Calu3 (cell line): ENCODE measurements at regions of chr19 and their contacts with region 1.

Region 1: DNA sequence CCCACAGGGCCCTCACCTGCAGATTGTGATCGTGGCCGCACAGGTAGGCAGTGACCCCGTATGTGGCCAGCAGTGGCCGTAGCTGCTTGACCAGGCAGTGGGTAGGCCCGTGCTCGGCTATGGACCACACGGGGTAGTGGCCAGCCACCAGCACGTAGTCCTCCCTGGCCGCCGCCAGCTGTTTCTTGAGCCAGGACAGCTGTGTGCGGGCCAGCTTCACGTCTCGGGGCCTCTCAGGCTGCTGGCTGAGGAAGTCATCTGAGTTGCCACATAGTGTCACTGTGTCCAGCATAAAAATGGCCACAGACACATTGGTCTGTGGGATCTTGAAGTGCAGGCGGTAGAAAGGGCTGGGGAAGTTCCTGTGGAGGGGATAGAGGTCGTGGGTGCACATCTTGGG is 1.2 kb downstream of the ACP5 start:
- DNase-seq: no peak
- H3K4me3 Mint-ChIP-seq: no peak overlapping the region
- H3K27ac Mint-ChIP-seq: no peak overlapping the region
- H3K4me1 Mint-ChIP-seq: no peaks in the 10 kb centered on the region
- H3K27me3 Mint-ChIP-seq: no peaks in the 10 kb centered on the region
- CTCF ChIP-seq: no peak

Region 2: DNA sequence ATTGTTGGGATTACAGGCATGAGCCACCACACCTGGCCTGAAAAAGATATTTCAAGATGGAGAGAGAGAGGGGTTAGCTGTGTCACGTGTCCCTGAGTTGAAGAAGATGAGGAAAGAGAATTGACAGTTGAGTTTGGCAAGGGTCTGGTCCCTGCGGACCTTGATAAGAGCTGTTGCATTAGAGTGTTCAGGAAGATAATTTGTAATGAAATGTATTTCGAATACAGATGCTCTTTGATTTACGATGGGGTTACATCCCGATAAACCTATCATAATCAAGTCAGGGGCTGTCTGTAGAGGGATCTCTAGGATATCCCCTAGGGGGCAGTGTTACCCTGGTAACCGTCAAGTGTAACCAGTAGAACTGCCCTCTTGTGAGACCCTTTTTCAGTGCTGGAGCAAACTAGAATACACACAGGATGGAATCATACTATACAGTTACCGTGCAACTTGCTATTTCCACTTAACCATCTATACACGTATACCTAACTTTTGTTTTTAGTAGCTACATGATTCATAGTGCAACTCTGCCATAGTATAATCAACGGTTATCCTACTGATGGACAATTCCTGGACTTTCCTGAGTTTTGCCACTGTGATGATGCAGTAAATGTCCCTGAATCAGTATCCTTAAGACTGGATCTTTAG is 15.7 kb before region 1 on chr19:
- CTCF ChIA-PET with region 1: interaction called, 3 read pairs
- intact Hi-C with region 1: loop called (anchors 1 kb)
- DNase-seq: peak; percentile 59
- H3K4me3 Mint-ChIP-seq: peak overlapping the region; percentile 92
- H3K27ac Mint-ChIP-seq: peak overlapping the region; percentile 54
- H3K4me1 Mint-ChIP-seq: peaks cover 16% of the 10 kb centered on the region
- H3K27me3 Mint-ChIP-seq: no peaks in the 10 kb centered on the region
- CTCF ChIP-seq: peak; percentile 34